GM13976 (cell line): ENCODE measurements at regions of chr3 and their contacts with region 1.

Region 1: GRCh38 chr3:149717391-149718056 is 34.8 kb downstream of the COMMD2 start:
- DNase-seq: peak; percentile 53
- CTCF ChIP-seq: peak; percentile 55

Region 2: GRCh38 chr3:148202386-148202785 is 1515.1 kb before region 1 on chr3:
- in situ Hi-C with region 1: no loop called
- DNase-seq: no peak
- CTCF ChIP-seq: no peak

Region 3: DNA sequence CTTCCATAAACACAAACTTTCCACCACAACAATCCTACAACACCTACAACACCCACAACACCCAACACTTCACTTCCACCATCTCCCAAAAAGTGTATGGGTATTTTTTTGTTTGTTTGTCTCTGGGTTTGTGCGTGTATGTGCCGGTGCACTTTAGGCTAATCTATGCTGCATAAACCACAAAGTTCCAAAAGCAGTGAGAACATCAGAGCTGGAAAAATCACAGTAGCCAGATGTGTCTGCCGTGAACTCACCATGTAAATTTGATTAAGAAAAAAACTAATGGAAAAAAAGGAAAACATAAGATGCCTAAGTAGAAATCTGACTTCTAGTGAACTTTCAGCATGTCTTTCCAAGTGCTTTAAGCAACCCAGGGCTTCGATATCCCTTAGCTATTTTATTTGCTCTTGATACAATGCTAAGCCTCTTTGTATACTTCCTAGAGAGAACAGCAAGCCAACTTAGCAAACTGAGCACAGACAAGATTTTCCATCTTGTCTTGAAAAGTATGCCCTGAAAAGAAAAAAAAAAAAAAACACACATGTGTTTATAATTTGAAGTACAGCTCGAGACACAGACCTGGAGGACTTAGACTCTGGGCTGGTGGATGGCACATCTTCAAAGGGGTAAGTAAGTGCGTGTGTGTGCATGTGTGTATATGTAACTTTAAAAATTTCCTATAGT is 151.1 kb before region 1 on chr3:
- in situ Hi-C with region 1: loop called (anchors 10 kb)
- DNase-seq: no peak
- CTCF ChIP-seq: no peak